Activated naive CD4-positive, alpha-beta T cell treated with anti-CD3 and anti-CD28 coated beads, Interleukin-2, amount 10 ng/mL, durations not matched to agents 7 days and 5 days (primary cell): ENCODE measurements at regions of chr19 and their contacts with region 1.

Region 1: DNA sequence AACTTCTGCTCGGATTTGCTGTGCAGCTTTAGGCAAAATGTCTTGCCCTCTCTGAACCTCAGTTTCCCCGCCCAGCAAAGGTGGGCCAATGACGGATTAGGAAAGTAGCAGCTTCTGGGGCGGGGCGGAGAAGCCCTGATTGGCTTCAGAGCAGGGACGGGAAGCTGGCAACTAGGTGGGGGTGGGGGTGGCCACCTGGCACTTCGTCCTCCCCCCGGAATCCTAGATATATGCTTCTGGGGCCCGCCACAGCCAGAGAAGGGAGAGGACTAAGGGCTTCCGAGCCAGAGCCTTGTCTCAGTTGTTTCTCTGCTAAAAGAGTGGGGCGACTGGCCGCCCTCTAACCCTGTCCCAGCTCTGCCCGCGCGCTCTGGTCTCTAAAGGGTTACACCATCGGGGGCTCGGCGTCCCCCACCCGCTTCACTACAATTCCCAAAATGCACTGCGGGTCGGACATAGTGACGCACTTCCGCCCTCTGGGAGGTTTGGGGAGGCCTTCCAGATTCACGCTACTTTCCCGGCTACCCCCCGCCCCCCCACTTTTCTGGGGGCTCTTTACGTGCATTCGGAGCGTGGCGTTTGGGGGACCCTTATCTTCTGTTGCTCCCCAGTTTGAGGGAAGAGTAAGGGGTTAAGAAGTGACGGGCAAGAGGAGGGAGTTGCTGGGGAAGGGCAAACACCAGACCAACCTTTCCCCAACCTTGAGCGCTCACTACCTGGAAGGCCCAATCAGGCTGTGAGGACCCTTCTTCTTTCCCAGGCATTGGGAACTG is 672 bp upstream of the IRF2BP1 start:
- DNase-seq: peak; percentile 97
- H3K4me3 Mint-ChIP-seq: peak overlapping the region; percentile 90
- H3K27ac Mint-ChIP-seq: peak overlapping the region; percentile 96
- H3K4me1 Mint-ChIP-seq: peaks cover 34% of the 10 kb centered on the region
- H3K27me3 Mint-ChIP-seq: peaks cover 4% of the 10 kb centered on the region

Region 2: DNA sequence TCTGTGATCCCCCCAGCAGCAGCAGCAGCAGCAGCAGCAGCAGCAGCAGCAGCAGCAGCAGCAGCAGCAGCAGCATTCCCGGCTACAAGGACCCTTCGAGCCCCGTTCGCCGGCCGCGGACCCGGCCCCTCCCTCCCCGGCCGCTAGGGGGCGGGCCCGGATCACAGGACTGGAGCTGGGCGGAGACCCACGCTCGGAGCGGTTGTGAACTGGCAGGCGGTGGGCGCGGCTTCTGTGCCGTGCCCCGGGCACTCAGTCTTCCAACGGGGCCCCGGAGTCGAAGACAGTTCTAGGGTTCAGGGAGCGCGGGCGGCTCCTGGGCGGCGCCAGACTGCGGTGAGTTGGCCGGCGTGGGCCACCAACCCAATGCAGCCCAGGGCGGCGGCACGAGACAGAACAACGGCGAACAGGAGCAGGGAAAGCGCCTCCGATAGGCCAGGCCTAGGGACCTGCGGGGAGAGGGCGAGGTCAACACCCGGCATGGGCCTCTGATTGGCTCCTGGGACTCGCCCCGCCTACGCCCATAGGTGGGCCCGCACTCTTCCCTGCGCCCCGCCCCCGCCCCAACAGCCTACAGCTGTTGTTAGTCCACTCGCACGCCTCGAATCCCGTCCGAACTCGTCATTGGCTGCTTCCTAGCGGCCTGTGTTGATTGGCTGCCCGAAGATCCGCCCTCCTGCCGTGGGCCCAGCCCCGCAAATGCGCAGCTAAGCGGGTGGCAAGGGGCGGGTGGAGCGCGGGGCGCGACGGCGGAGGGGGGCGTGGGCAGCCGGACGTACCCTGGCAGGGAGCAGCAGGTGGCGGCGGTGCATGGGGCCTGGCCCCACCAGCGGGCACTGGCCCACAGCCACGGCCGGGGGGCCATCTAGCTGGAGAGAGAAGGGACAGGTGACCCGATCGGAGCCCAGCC is 116.2 kb before region 1 on chr19:
- CTCF ChIA-PET with region 1: interaction called, 22 read pairs
- DNase-seq: peak; percentile 92
- H3K4me3 Mint-ChIP-seq: peak overlapping the region; percentile 83
- H3K27ac Mint-ChIP-seq: peak overlapping the region; percentile 89
- H3K4me1 Mint-ChIP-seq: peaks cover 23% of the 10 kb centered on the region
- H3K27me3 Mint-ChIP-seq: peaks cover 81% of the 10 kb centered on the region

Region 3: GRCh38 chr19:45817010-45817724 is 69.4 kb before region 1 on chr19:
- CTCF ChIA-PET with region 1: interaction called, 19 read pairs
- DNase-seq: peak; percentile 98
- H3K4me3 Mint-ChIP-seq: no peak overlapping the region
- H3K27ac Mint-ChIP-seq: peak overlapping the region; percentile 78
- H3K4me1 Mint-ChIP-seq: peaks cover 3% of the 10 kb centered on the region
- H3K27me3 Mint-ChIP-seq: peaks cover 19% of the 10 kb centered on the region

Region 4: DNA sequence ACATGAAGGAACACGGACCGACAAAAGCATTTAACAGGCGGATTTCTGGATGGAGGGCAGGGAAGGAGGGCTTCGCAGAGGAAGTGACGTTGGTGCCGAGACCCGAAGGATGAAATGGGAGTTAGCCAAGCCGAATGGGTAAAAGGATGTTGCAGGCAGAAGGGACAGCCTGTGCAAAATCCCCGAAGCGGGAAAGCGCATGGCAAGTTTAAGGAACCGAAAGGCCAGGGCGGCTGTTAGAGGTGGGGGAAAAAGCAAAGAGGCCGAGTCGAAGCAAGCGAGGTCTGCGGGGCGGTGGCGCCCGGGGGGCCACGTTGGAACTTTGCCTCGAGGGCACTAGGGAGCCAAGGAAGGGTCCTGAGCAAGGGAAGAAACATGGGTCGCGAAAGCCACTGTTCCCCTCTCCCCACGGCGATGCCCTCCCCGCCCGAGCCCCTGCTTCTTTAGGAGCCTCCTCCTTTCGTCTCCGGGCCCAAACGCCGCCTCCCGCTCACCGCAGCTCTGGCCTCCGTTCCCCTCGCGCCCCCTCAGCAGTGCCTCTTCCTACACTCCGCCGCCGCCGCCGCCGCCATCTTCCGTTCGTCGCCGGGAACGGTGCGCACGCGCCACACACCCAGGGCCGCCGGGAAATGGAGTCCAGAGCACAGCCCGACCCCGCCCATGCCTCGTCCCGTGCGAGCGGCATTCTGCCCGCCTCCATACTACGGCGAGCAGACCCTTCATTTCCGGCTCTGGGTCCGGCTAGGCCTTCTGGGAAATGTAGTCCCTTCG is 23.9 kb before region 1 on chr19 and contains the start of gene SYMPK:
- CTCF ChIA-PET with region 1: interaction called, 58 read pairs
- DNase-seq: peak; percentile 99
- H3K4me3 Mint-ChIP-seq: peak within 1 kb of the TSS; percentile 94
- H3K27ac Mint-ChIP-seq: peak within 1 kb of the TSS; percentile 94
- H3K4me1 Mint-ChIP-seq: peaks cover 40% of the 10 kb centered on the region
- H3K27me3 Mint-ChIP-seq: peaks cover 48% of the 10 kb centered on the region

Region 5: GRCh38 chr19:45902651-45903625 is 16.3 kb after region 1 on chr19:
- CTCF ChIA-PET with region 1: interaction called, 13 read pairs
- DNase-seq: peak; percentile 99
- H3K4me3 Mint-ChIP-seq: peak overlapping the region; percentile 98
- H3K27ac Mint-ChIP-seq: peak overlapping the region; percentile 82
- H3K4me1 Mint-ChIP-seq: peaks cover 31% of the 10 kb centered on the region
- H3K27me3 Mint-ChIP-seq: peaks cover 25% of the 10 kb centered on the region